ENCODE measurements at regions of chrX and their contacts with region 1.

Region 1: DNA sequence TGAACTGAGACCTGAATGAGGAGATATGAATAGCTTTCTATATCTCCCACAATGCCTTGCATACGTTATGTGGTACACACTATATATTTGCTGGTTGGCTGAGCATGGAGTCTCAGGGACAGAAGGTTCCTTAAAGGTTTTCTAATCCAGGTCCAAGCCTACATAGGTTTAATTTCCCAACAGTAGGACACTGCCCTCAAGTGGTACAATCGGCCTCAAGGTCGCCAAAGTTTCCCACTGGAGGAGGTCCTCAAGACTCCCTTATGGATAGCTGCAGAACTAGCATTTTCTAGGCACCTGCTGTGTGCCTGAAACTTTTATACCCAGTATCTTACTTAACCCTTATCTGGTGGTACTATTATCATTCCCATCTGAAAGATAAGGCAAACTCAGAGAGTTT is 21.0 kb upstream of the EFNB1 start:
- DNase-seq: peak in 1 of 3 donors; percentile 56
- ATAC-seq: peak; percentile 59 to 72
- H3K4me3 ChIP-seq: no peak overlapping the region
- H3K27ac ChIP-seq: no peak overlapping the region
- H3K4me1 ChIP-seq: no peaks in the 10 kb centered on the region
- H3K27me3 ChIP-seq: no peaks in the 10 kb centered on the region

Region 2: GRCh38 chrX:68490599-68490998 is 317.2 kb before region 1 on chrX:
- intact Hi-C with region 1: no loop called
- DNase-seq: no peak
- ATAC-seq: peak in 1 of 2 donors; percentile 63
- H3K4me3 ChIP-seq: no peak overlapping the region
- H3K27ac ChIP-seq: no peak overlapping the region
- H3K4me1 ChIP-seq: no peaks in the 10 kb centered on the region
- H3K27me3 ChIP-seq: no peaks in the 10 kb centered on the region

Region 3: DNA sequence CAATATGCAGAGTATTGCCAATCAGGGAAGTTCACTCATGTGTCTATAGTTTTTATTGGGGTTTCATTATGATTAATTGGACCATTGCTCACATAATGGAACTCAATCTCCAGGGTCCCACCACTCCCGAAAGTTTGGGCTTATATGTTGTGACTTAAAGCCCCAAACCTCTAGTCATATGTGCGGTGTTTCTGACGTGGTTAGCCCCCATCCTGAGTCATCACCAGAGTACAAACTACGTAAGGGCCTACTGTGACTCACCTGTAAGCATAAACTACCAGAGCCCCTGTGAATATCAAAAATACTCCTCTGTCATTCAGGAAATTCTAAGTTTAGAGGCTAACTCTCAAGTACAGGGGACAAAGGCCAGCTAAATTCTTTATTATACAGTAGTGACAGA is 303.6 kb before region 1 on chrX:
- intact Hi-C with region 1: loop called in 1 of 4 experiments (anchors 10 kb)
- DNase-seq: no peak
- ATAC-seq: no peak
- H3K4me3 ChIP-seq: no peak overlapping the region
- H3K27ac ChIP-seq: no peak overlapping the region
- H3K4me1 ChIP-seq: no peaks in the 10 kb centered on the region
- H3K27me3 ChIP-seq: no peaks in the 10 kb centered on the region

Region 4: GRCh38 chrX:68732906-68733493 is 74.8 kb before region 1 on chrX:
- intact Hi-C with region 1: loop called in 2 of 4 experiments (anchors 2 kb)
- DNase-seq: peak; percentile 66 to 87 (median 87)
- ATAC-seq: peak; percentile 84 to 86
- H3K4me3 ChIP-seq: no peak overlapping the region
- H3K27ac ChIP-seq: no peak overlapping the region
- H3K4me1 ChIP-seq: no peaks in the 10 kb centered on the region
- H3K27me3 ChIP-seq: no peaks in the 10 kb centered on the region

Measured in right cardiac atrium (tissue), 5 donors.